ENCODE measurements at regions of chr6 and their contacts with region 1.

Region 1: GRCh38 chr6:27795697-27796494 is 116.3 kb downstream of the OR2B2 start:
- DNase-seq: peak; percentile 39
- H3K4me3 Mint-ChIP-seq: no peak overlapping the region
- H3K27ac Mint-ChIP-seq: peak overlapping the region; percentile 67
- H3K4me1 Mint-ChIP-seq: peaks cover 22% of the 10 kb centered on the region
- H3K27me3 Mint-ChIP-seq: peaks cover 8% of the 10 kb centered on the region

Region 2: DNA sequence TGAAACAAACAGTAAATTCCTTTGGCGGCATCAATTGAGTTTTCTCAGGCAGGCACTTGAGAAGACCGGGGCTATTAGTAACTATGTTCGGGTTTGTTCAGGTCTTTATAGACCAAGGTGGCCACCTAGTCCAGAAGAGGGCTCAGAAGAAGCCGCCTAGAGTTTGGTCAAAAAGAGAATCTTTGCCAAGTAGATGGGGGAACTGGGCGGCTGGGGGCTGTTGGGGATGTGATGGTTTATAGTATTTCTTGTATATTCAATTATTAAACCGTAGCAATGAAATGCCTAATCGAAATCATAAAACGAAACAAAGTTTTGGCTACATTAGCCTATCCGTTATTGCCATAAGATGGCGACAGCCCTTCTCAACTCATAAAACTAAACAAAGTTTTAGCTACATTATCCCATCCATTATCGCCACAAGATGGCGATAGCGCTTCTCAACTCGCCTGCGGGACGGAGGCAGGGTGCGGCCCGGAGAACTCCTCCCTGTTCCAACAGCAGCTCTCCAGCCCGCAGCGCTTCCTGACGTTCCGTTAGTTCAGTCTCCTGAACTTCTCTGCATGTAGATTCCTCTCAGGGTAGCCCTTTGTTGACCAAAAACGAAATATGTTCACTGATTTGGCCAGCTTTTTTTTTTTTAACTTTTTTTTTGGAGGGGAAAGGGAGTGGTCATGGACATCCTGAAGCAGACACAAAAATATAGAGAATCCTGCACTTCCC is 668.9 kb before region 1 on chr6:
- CTCF ChIA-PET with region 1: interaction called, 12 read pairs
- POLR2A ChIA-PET with region 1: no interaction called
- intact Hi-C with region 1: no loop called
- DNase-seq: peak; percentile 88
- H3K4me3 Mint-ChIP-seq: peak overlapping the region; percentile 71
- H3K27ac Mint-ChIP-seq: peak overlapping the region; percentile 65
- H3K4me1 Mint-ChIP-seq: peaks cover 19% of the 10 kb centered on the region
- H3K27me3 Mint-ChIP-seq: no peaks in the 10 kb centered on the region

Region 3: GRCh38 chr6:27441001-27441400 is 354.9 kb before region 1 on chr6:
- CTCF ChIA-PET with region 1: no interaction called
- POLR2A ChIA-PET with region 1: no interaction called
- intact Hi-C with region 1: no loop called
- DNase-seq: no peak
- H3K4me3 Mint-ChIP-seq: no peak overlapping the region
- H3K27ac Mint-ChIP-seq: no peak overlapping the region
- H3K4me1 Mint-ChIP-seq: no peaks in the 10 kb centered on the region
- H3K27me3 Mint-ChIP-seq: no peaks in the 10 kb centered on the region